Activated CD4-positive, alpha-beta T cell treated with anti-CD3 and anti-CD28 coated beads for 36 hours (primary cell): ENCODE measurements at regions of chr17 and their contacts with region 1.

Region 1: DNA sequence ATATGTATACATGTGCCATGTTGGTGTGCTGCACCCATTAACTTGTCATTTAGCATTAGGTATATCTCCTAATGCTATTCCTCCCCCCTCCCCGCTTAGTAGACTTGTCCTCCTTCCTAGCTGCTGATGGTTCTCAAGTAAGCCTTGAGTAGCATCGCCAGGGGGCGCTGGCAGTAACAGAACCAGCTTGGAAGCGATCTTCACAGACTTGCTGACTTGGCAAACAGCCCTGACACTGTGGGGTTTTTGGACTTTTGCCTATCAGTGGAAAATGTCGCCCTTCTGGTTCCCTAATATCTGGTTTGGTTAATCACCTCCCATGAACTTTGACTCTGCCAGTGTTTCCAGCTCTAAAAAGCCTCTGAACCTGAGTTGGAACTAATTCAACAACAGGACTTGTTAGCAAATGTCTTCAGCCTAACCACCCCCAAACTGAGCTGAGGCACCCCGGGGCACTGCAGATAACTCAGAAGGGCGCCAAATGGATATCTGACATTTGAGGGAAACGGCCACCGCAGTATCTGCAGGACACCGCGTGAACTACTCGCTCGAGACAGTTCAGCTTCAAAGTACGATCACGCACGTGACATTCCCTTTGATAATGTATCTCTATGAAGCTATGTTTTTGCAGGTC is 15.4 kb upstream of the SPATA32 start:
- DNase-seq: peak; percentile 95
- ATAC-seq: peak; percentile 95
- H3K4me3 Mint-ChIP-seq: no peak overlapping the region
- H3K27ac Mint-ChIP-seq: peak overlapping the region; percentile 39
- H3K4me1 Mint-ChIP-seq: peaks cover 14% of the 10 kb centered on the region
- H3K27me3 Mint-ChIP-seq: no peaks in the 10 kb centered on the region

Region 2: GRCh38 chr17:44919885-44920564 is 357.3 kb before region 1 on chr17:
- CTCF ChIA-PET with region 1: no interaction called
- POLR2A ChIA-PET with region 1: no interaction called
- intact Hi-C with region 1: no loop called
- DNase-seq: peak; percentile 85
- ATAC-seq: peak; percentile 93
- H3K4me3 Mint-ChIP-seq: no peak overlapping the region
- H3K27ac Mint-ChIP-seq: no peak overlapping the region
- H3K4me1 Mint-ChIP-seq: no peaks in the 10 kb centered on the region
- H3K27me3 Mint-ChIP-seq: peaks cover 9% of the 10 kb centered on the region

Region 3: GRCh38 chr17:45110668-45111611 is 166.4 kb before region 1 on chr17:
- CTCF ChIA-PET with region 1: no interaction called
- POLR2A ChIA-PET with region 1: no interaction called
- intact Hi-C with region 1: no loop called
- DNase-seq: no peak
- ATAC-seq: no peak
- H3K4me3 Mint-ChIP-seq: no peak overlapping the region
- H3K27ac Mint-ChIP-seq: no peak overlapping the region
- H3K4me1 Mint-ChIP-seq: no peaks in the 10 kb centered on the region
- H3K27me3 Mint-ChIP-seq: no peaks in the 10 kb centered on the region

Region 4: GRCh38 chr17:45228763-45229539 is 48.4 kb before region 1 on chr17:
- CTCF ChIA-PET with region 1: interaction called, 21 read pairs
- POLR2A ChIA-PET with region 1: no interaction called
- intact Hi-C with region 1: no loop called
- DNase-seq: peak; percentile 93
- ATAC-seq: peak; percentile 37
- H3K4me3 Mint-ChIP-seq: peak overlapping the region; percentile 94
- H3K27ac Mint-ChIP-seq: peak overlapping the region; percentile 100
- H3K4me1 Mint-ChIP-seq: peaks cover 82% of the 10 kb centered on the region
- H3K27me3 Mint-ChIP-seq: no peaks in the 10 kb centered on the region

Region 5: GRCh38 chr17:45261577-45262515 is 15.5 kb before region 1 on chr17 and contains the start of gene SPATA32:
- CTCF ChIA-PET with region 1: interaction called, 26 read pairs
- POLR2A ChIA-PET with region 1: no interaction called
- intact Hi-C with region 1: no loop called
- DNase-seq: peak; percentile 81
- ATAC-seq: peak; percentile 80
- H3K4me3 Mint-ChIP-seq: peak within 1 kb of the TSS; percentile 59
- H3K27ac Mint-ChIP-seq: peak within 1 kb of the TSS; percentile 72
- H3K4me1 Mint-ChIP-seq: peaks cover 34% of the 10 kb centered on the region
- H3K27me3 Mint-ChIP-seq: no peaks in the 10 kb centered on the region
- total RNA-seq, gene SPATA32: 0.21 to 0.25 TPM

Region 6: DNA sequence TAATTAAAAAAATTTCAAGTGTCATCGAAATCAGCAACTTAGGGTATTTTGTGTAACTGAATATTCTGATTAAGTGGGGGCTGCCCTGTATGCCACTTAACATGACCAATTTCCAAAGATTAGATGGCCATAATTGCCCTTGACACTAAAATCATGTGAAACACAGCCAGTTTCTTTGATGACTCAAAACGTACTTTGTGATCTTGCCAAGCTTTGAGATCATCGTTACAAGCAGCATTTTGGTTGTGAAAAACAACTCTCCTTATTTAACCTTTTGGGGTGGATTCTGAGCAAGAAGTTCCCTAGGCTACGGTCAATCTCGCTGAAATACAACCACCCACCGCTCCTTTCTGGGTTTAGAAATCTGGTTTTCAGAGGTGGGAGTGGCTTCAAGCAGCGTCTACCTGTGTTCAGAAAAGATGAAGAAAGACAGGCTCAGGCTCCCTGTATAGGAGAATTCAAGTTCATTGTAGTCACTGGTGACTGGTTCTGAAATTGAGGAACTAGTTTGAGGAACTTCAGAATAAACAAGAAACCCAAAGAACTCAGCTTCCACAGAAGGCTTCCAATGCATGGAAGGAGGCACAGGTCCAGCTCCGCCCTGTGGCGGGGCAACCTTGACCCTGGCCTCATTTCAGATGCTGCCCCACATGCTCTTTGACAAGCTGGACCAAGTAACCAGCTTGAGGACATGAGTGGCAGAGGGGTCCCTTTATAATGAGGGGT is 30.1 kb after region 1 on chr17:
- CTCF ChIA-PET with region 1: interaction called, 28 read pairs
- POLR2A ChIA-PET with region 1: interaction called, 10 read pairs
- intact Hi-C with region 1: loop called in 1 of 2 experiments (anchors 5 kb)
- DNase-seq: peak; percentile 78
- ATAC-seq: peak; percentile 56
- H3K4me3 Mint-ChIP-seq: peak overlapping the region; percentile 44
- H3K27ac Mint-ChIP-seq: peak overlapping the region; percentile 97
- H3K4me1 Mint-ChIP-seq: peaks cover 89% of the 10 kb centered on the region
- H3K27me3 Mint-ChIP-seq: no peaks in the 10 kb centered on the region

Region 7: DNA sequence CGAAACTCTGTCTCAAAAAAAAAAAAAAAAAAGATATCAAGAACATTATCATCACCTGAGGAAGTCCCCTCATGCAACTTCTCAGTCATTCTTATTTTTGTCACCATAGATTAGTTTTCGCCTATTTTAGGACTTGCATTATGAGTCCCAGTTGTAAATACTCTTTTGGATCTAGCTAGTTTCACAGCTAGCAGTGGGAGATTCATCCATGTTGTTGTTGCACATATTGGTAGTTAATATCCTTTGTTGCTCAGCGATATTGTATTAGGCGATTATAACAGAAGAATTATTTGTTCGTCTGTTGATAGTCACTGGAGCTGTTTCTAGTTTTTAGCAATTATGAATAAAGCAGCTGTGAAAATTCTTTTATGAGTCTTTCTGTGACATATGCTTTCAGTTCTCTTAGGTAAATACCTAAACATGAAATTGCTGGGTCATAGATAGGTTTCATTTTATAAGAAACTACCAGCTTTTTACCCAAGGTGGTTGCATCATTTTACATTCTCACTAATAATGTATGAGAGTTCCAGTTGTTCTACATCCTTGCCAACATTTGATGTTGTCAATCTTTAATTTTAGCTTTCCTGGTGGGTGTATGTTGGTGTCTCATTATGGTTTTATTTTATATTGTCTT is 80.1 kb after region 1 on chr17:
- CTCF ChIA-PET with region 1: interaction called, 10 read pairs
- POLR2A ChIA-PET with region 1: no interaction called
- intact Hi-C with region 1: no loop called
- DNase-seq: no peak
- ATAC-seq: peak; percentile 68
- H3K4me3 Mint-ChIP-seq: no peak overlapping the region
- H3K27ac Mint-ChIP-seq: no peak overlapping the region
- H3K4me1 Mint-ChIP-seq: peaks cover 35% of the 10 kb centered on the region
- H3K27me3 Mint-ChIP-seq: peaks cover 17% of the 10 kb centered on the region

Region 8: GRCh38 chr17:45385331-45385997 is 108.1 kb after region 1 on chr17:
- CTCF ChIA-PET with region 1: interaction called, 167 read pairs
- POLR2A ChIA-PET with region 1: interaction called, 3 read pairs
- intact Hi-C with region 1: loop called (anchors 1 kb)
- DNase-seq: peak; percentile 96
- ATAC-seq: peak; percentile 96
- H3K4me3 Mint-ChIP-seq: no peak overlapping the region
- H3K27ac Mint-ChIP-seq: peak overlapping the region; percentile 71
- H3K4me1 Mint-ChIP-seq: peaks cover 14% of the 10 kb centered on the region
- H3K27me3 Mint-ChIP-seq: peaks cover 4% of the 10 kb centered on the region